ENCODE measurements at regions of chr18 and their contacts with region 1.

Region 1: GRCh38 chr18:32405588-32405987 is 65.1 kb downstream of the GAREM1 start:
- DNase-seq: no peak
- H3K4me3 ChIP-seq: no peak overlapping the region
- H3K27ac ChIP-seq: no peak overlapping the region
- H3K4me1 ChIP-seq: no peaks in the 10 kb centered on the region
- H3K27me3 ChIP-seq: peaks cover 0 to 3% of the 10 kb centered on the region in 2 experiments
- CTCF ChIP-seq: no peak
- POLR2A ChIP-seq: no peak

Region 2: GRCh38 chr18:32425466-32425865 is 19.9 kb after region 1 on chr18:
- CTCF ChIA-PET with region 1: no interaction called
- POLR2A ChIA-PET with region 1: no interaction called
- dilution Hi-C with region 1: no loop called
- intact Hi-C with region 1: no loop called
- DNase-seq: peak; percentile 3
- H3K4me3 ChIP-seq: no peak overlapping the region
- H3K27ac ChIP-seq: no peak overlapping the region
- H3K4me1 ChIP-seq: no peaks in the 10 kb centered on the region
- H3K27me3 ChIP-seq: peaks cover 0 to 1% of the 10 kb centered on the region in 2 experiments
- CTCF ChIP-seq: no peak
- POLR2A ChIP-seq: no peak

Region 3: DNA sequence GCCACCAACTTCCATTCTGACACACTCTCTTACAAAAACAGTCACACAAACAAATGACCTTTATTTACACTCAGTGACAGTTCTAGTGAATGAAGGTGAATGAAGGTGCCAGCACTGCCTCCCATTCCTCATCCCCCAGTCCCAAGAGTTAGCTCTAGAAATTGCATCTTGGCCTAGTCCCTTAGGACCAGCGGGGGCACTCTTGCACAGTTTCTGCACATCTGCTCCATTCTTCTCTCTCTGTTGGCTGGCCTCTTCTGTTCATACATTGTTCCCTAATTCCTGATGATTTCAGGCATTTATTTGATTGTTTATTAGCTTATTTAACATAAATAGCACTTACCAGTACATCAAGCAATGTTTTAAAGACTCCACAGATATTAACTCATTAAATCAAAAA is 34.2 kb after region 1 on chr18:
- CTCF ChIA-PET with region 1: no interaction called
- POLR2A ChIA-PET with region 1: no interaction called
- dilution Hi-C with region 1: no loop called
- intact Hi-C with region 1: loop called (anchors 2 kb)
- DNase-seq: peak; percentile 9
- H3K4me3 ChIP-seq: no peak overlapping the region
- H3K27ac ChIP-seq: no peak overlapping the region
- H3K4me1 ChIP-seq: no peaks in the 10 kb centered on the region
- H3K27me3 ChIP-seq: no peaks in the 10 kb centered on the region
- CTCF ChIP-seq: peak; percentile 23 to 34
- POLR2A ChIP-seq: no peak